Sciatic nerve (tissue), 2 donors: ENCODE measurements at regions of chr18 and their contacts with region 1.

Region 1: DNA sequence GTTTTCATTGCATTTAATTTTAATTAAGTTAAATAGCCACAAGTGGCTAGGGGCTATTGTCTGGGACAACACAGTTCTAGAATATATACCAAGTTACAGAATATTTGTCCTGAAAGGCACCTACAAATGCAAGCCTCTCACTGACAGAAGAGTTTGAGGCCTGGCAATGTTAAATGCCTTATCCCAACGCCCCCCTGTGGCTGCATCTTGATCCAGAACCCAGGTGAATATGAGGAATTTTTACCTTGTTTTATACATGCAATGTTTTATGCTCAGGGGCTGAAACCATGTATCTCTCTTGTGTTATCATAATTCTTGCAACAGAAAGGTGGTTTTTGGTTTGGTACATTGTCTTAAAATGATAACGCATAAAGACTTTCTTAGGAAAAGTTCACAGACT is 71.8 kb upstream of the SEC11C start:
- DNase-seq: no peak
- ATAC-seq: no peak

Region 2: GRCh38 chr18:58776084-58776483 is 291.8 kb before region 1 on chr18:
- intact Hi-C with region 1: loop called (anchors 5 kb)
- DNase-seq: no peak
- ATAC-seq: no peak